Ascending aorta (tissue), 2 donors: ENCODE measurements at regions of chrX and their contacts with region 1.

Region 1: GRCh38 chrX:119488749-119489148 is 20.5 kb downstream of the SLC25A5 start:
- DNase-seq: peak in 1 of 2 donors; percentile 80
- H3K4me3 ChIP-seq: no peak overlapping the region
- H3K27ac ChIP-seq: no peak overlapping the region
- H3K4me1 ChIP-seq: no peaks in the 10 kb centered on the region
- H3K27me3 ChIP-seq: no peaks in the 10 kb centered on the region
- CTCF ChIP-seq: peak; percentile 28 to 65 (median 44)

Region 2: DNA sequence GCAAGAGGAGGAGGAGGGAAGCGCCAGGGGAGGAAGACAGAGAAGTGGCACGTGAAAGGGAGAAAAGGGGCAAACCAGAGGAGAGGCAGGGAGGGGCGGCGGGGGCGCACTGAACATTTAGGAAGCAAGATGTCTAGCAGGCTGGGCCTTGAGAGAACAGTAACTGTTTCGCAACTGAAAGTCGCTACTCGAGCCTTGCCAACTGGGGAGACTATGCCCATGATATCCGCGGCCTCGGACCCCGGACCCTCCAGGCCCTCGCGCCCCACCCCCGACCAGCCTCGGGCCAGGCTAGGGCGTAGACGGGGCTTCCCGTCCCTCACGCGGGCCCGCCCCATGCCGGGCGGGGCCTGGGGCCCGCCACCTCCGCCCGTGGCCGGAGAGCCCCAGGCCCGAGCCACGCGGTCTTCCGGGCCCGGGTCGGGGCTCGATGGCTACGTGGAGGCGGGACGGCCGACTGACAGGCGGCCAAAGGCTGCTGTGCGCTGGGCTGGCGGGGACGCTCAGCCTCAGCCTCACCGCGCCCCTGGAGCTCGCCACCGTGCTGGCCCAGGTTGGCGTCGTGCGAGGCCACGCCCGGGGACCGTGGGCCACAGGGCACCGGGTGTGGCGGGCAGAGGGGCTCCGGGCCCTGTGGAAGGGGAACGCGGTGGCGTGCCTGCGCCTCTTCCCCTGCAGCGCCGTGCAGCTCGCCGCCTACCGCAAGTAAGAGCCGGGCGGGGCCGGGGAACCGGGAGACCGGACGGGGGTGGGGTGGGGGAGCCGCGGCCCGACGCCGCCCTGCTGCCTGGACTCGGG is 89.6 kb before region 1 on chrX and contains the start of gene SLC25A43:
- intact Hi-C with region 1: no loop called
- DNase-seq: no peak
- H3K4me3 ChIP-seq: peak within 1 kb of the TSS; percentile 61 to 73
- H3K27ac ChIP-seq: peak within 1 kb of the TSS; percentile 77 to 84
- H3K4me1 ChIP-seq: no peaks in the 10 kb centered on the region
- H3K27me3 ChIP-seq: no peaks in the 10 kb centered on the region
- CTCF ChIP-seq: no peak
- total RNA-seq, gene SLC25A43: 26.6 TPM

Region 3: GRCh38 chrX:119512146-119512800 is 23.5 kb after region 1 on chrX:
- intact Hi-C with region 1: loop called (anchors 1 kb)
- DNase-seq: peak in 1 of 2 donors; percentile 73
- H3K4me3 ChIP-seq: no peak overlapping the region
- H3K27ac ChIP-seq: no peak overlapping the region
- H3K4me1 ChIP-seq: no peaks in the 10 kb centered on the region
- H3K27me3 ChIP-seq: no peaks in the 10 kb centered on the region
- CTCF ChIP-seq: peak; percentile 52 to 68 (median 66)